ENCODE measurements at regions of chr3 and their contacts with region 1.

Region 1: GRCh38 chr3:151135541-151136337 is 50.3 kb downstream of the MED12L start:
- DNase-seq: peak; percentile 30 to 40
- H3K4me3 ChIP-seq: no peak overlapping the region
- H3K27ac ChIP-seq: no peak overlapping the region
- H3K4me1 ChIP-seq: peaks cover 15% of the 10 kb centered on the region
- H3K27me3 ChIP-seq: no peaks in the 10 kb centered on the region
- CTCF ChIP-seq: no peak

Region 2: GRCh38 chr3:150503402-150504099 is 632.2 kb before region 1 on chr3:
- CTCF ChIA-PET with region 1: no interaction called
- POLR2A ChIA-PET with region 1: interaction called, 12 read pairs
- intact Hi-C with region 1: no loop called
- DNase-seq: no peak
- H3K4me3 ChIP-seq: no peak overlapping the region
- H3K27ac ChIP-seq: no peak overlapping the region
- H3K4me1 ChIP-seq: peaks cover 4% of the 10 kb centered on the region
- H3K27me3 ChIP-seq: no peaks in the 10 kb centered on the region
- CTCF ChIP-seq: no peak

Region 3: GRCh38 chr3:151101270-151101969 is 34.3 kb before region 1 on chr3:
- CTCF ChIA-PET with region 1: interaction called, 15 read pairs
- POLR2A ChIA-PET with region 1: no interaction called
- intact Hi-C with region 1: no loop called
- DNase-seq: no peak
- H3K4me3 ChIP-seq: no peak overlapping the region
- H3K27ac ChIP-seq: no peak overlapping the region
- H3K4me1 ChIP-seq: 0 out of 2 replicates have a peak, but pooled peaks cover under 1% of the 10 kb centered on the region
- H3K27me3 ChIP-seq: no peaks in the 10 kb centered on the region
- CTCF ChIP-seq: no peak

Measured in PC-9 (cell line).